ENCODE measurements at regions of chr10 and their contacts with region 1.

Region 1: GRCh38 chr10:73803680-73804286 is 7.6 kb downstream of the NDST2 start:
- DNase-seq: peak; percentile 32

Region 2: DNA sequence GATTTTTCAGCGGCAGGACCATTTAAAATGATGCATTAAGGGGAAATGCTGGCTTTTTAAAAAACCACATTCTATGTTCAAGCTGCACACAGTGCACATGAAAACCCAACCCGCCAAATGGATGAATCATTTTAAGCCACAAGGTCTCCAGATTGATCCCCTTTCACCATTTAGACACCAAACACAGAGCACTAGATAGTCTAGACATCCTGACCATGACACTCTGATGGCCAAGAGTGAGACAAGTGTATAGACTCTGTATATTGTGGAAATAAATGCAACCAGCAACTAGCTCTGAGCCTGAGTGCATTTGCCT is 1981.4 kb before region 1 on chr10:
- intact Hi-C with region 1: no loop called
- DNase-seq: no peak

Region 3: GRCh38 chr10:73827346-73828089 is 23.7 kb after region 1 on chr10:
- intact Hi-C with region 1: loop called in 1 of 2 experiments (anchors 1 kb)
- DNase-seq: no peak

Measured in posterior vena cava (tissue), 2 donors.